Activated naive CD4-positive, alpha-beta T cell treated with anti-CD3 and anti-CD28 coated beads for 36 hours (primary cell): ENCODE measurements at regions of chr2 and their contacts with region 1.

Region 1: DNA sequence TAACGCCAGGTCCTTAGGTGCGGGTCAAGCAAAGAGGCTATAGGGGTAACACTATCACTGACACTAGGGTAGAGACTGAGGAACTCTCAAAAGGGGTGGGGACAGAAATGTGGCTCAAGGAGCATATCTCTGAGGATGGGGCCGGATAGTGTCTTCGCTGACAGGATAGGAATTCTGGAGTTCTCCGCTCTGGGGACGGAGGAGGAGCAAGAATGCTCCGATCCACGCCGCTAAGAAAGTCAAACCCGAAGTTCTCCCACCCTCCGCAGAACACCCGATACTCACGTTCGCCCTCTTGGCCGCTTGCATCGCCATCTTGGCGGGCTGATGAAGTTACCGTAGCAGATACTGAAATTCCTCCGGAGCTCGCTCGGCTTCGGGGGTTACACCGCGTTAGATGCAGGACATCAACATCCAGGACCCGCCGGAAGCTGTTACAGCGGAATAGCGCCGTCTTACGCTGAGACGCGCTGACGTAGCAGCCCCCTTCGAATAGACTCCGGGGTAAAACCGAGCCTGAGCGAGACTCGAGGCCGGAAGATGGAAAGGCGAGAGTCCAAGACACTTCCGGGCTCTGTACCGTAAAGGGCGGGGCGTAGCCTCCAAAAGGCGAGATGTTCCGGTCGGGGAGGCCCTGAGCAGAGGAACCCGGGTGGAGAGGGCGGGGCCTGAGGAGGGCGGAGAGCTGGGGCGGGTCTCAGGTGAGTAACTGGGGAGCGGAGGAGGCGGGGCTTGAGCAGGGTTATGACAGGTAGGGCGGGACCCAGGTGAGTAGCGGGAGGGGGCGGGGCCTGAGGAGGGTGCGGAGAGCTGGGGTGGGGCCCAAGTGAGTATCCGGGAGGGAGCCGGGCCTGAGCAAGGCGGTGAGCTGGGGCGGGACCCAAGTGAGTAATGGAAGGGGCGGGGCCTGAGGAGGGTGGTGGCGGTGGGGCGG is at the start of gene SF3B6:
- DNase-seq: peak; percentile 100
- H3K4me3 Mint-ChIP-seq: peak within 1 kb of the TSS; percentile 97
- H3K27ac Mint-ChIP-seq: peak within 1 kb of the TSS; percentile 93
- H3K4me1 Mint-ChIP-seq: peaks cover 36% of the 10 kb centered on the region
- H3K27me3 Mint-ChIP-seq: no peaks in the 10 kb centered on the region
- total RNA-seq, gene SF3B6: 151 to 164 TPM

Region 2: DNA sequence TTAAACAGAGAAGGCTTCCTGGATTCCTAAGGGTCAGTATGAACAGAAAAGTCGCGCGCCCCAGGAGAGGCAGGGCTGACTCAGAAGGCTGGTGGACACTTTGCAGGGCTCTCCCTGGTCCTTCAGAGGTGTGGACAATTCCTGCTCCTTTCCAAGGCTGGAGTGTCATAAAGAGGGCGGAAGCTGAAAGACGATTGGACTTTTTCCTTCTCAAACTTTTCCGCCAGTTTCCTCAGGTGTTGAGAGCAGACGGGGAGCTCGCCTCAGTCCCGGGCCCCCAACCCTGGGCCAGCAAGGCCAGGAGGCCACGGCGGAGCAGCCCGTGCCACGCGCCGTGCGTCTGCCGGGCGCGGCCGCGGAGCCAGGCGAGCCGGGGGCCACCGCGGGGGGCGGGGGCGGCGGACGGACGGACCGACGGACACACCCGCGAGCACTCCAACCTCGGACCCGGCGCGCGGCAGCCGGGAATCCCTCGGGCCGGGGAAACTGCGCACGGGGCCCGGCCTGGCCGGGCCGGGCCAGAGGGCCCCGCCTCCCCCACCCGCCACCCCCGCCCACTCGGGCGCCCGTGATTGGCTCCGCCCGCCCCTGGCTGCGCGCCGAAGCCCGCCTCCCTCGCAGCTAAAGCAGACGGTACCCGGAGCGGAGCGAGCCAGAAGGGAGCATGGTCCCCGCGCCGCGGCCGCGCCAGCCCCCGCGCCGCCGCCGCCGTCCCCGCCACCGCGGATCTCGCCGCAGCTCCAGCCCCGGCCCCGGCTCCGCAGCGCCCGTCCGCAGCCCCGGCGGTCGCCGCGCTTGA is 691.4 kb before region 1 on chr2 and contains the start of gene KLHL29:
- CTCF ChIA-PET with region 1: no interaction called
- intact Hi-C with region 1: loop called (anchors 1 kb)
- DNase-seq: peak; percentile 73
- H3K4me3 Mint-ChIP-seq: peak within 1 kb of the TSS; percentile 76
- H3K27ac Mint-ChIP-seq: no peak within 1 kb of the TSS
- H3K4me1 Mint-ChIP-seq: peaks cover 32% of the 10 kb centered on the region
- H3K27me3 Mint-ChIP-seq: peaks cover 38% of the 10 kb centered on the region
- total RNA-seq, gene KLHL29: 2.4 to 2.9 TPM

Region 3: DNA sequence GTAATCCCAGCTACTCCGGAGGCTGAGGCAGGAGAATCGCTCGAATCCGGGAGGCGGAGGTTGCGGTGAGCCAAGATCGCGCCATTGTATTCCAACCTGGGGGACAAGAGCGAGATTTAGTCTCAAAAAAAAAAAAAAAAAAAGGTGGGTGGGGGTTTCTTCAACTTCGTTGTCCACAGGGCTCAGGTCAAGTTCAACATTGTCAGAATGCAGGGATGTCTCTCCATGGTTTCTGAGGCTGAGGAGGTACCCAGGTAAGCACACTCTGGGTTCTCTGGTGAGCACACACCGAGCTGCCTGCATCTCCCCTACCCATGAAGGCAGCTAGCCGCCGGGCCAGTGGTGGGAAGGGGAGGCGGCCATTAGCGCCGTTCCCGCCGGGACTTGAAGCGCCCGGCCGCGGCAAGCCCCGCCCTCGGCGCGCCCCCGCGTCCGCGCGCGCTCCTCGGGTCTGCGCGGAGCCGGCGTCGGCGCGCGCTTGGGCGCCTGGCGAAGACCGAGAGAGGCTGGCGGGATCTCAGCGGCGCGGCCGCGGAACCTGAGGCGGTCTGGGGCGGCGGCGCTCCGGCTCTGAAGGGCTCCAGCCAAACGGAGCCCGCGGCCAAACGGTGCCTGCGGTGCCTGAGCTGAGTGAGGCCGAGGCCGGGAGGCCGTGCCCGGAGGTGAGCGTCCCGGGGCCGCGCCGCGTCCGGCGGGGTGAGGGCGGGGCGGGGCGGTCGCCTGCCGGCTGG is 136.0 kb before region 1 on chr2 and contains the start of gene UBXN2A:
- CTCF ChIA-PET with region 1: interaction called, 4 read pairs
- intact Hi-C with region 1: loop called (anchors 1 kb)
- DNase-seq: peak; percentile 71
- H3K4me3 Mint-ChIP-seq: peak within 1 kb of the TSS; percentile 88
- H3K27ac Mint-ChIP-seq: peak within 1 kb of the TSS; percentile 84
- H3K4me1 Mint-ChIP-seq: peaks cover 15% of the 10 kb centered on the region
- H3K27me3 Mint-ChIP-seq: peaks cover 8% of the 10 kb centered on the region
- total RNA-seq, gene UBXN2A: 7.6 to 7.7 TPM

Region 4: DNA sequence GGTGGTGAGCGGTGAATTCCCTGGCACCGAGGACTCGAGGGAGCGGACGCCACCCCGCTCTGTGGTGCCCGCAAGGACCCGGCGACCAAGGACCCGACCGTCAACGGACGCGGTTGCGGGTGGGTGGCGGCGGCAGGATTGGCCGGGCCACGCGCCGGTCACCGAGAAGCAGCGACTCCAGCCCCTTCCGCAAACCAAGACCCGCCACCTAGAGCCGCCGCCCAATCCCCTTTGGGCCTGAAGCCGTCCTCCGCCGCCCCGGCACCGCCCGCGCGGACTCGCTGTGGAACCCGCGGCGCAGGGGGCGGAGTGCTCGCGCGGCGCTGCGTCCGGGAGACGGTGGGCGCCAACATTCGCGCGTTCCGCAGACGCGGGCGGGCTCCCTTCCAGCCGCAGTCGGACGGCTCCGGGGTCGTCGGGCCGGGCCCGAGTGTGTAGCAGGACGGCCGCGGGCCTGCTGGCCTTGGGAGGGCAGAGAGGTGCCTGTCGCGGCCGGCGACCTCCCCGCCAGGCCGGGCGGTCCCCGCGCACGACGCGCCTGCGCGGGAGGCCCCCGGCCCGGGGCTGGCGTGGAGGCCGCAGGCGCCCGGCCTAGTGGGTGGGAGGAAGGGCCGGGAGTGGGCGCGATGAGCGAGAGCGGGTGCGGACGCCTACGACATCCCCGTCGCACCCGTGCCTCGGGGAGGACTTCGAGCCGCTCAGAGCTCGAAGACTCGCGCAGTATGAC is 47.2 kb after region 1 on chr2 and contains the starts of genes FAM228B and PFN4:
- CTCF ChIA-PET with region 1: no interaction called
- intact Hi-C with region 1: loop called (anchors 1 kb)
- DNase-seq: peak; percentile 83
- H3K4me3 Mint-ChIP-seq: peak within 1 kb of the TSS; percentile 75
- H3K27ac Mint-ChIP-seq: peak within 1 kb of the TSS; percentile 8
- H3K4me1 Mint-ChIP-seq: peaks cover 5% of the 10 kb centered on the region
- H3K27me3 Mint-ChIP-seq: peaks cover 5% of the 10 kb centered on the region
- total RNA-seq, gene FAM228B: 3.6 to 4.1 TPM
- total RNA-seq, gene PFN4: 0.32 TPM in 1 of 2 experiments, not detected in the other

Region 5: GRCh38 chr2:24490674-24491625 is 414.8 kb after region 1 on chr2 and contains the start of gene NCOA1:
- CTCF ChIA-PET with region 1: no interaction called
- intact Hi-C with region 1: loop called (anchors 1 kb)
- DNase-seq: peak; percentile 95
- H3K4me3 Mint-ChIP-seq: peak within 1 kb of the TSS; percentile 89
- H3K27ac Mint-ChIP-seq: peak within 1 kb of the TSS; percentile 95
- H3K4me1 Mint-ChIP-seq: peaks cover 47% of the 10 kb centered on the region
- H3K27me3 Mint-ChIP-seq: no peaks in the 10 kb centered on the region
- total RNA-seq, gene NCOA1: 14.0 to 15.4 TPM

Region 6: GRCh38 chr2:24792874-24793760 is 716.9 kb after region 1 on chr2 and contains the starts of genes CENPO and PTRHD1:
- CTCF ChIA-PET with region 1: no interaction called
- intact Hi-C with region 1: loop called (anchors 1 kb)
- DNase-seq: peak; percentile 97
- H3K4me3 Mint-ChIP-seq: peak within 1 kb of the TSS; percentile 97
- H3K27ac Mint-ChIP-seq: peak within 1 kb of the TSS; percentile 99
- H3K4me1 Mint-ChIP-seq: peaks cover 40% of the 10 kb centered on the region
- H3K27me3 Mint-ChIP-seq: no peaks in the 10 kb centered on the region
- total RNA-seq, gene CENPO: 36.4 to 38.5 TPM
- total RNA-seq, gene PTRHD1: 21.7 to 23.5 TPM